ENCODE measurements at regions of chr17 and their contacts with region 1.

Region 1: GRCh38 chr17:29140051-29140621 is 40.1 kb downstream of the MYO18A start:
- DNase-seq: peak; percentile 51 to 87 (median 68)
- ATAC-seq: peak; percentile 61 to 72
- H3K4me3 Mint-ChIP-seq: peak overlapping the region; percentile 85 to 95 (median 92)
- H3K27ac Mint-ChIP-seq: peak overlapping the region; percentile 87 to 100 (median 98)
- H3K4me1 Mint-ChIP-seq: peaks cover 35 to 84% (median 65%) of the 10 kb centered on the region in 4 donors
- H3K27me3 Mint-ChIP-seq: no peaks in the 10 kb centered on the region

Region 2: DNA sequence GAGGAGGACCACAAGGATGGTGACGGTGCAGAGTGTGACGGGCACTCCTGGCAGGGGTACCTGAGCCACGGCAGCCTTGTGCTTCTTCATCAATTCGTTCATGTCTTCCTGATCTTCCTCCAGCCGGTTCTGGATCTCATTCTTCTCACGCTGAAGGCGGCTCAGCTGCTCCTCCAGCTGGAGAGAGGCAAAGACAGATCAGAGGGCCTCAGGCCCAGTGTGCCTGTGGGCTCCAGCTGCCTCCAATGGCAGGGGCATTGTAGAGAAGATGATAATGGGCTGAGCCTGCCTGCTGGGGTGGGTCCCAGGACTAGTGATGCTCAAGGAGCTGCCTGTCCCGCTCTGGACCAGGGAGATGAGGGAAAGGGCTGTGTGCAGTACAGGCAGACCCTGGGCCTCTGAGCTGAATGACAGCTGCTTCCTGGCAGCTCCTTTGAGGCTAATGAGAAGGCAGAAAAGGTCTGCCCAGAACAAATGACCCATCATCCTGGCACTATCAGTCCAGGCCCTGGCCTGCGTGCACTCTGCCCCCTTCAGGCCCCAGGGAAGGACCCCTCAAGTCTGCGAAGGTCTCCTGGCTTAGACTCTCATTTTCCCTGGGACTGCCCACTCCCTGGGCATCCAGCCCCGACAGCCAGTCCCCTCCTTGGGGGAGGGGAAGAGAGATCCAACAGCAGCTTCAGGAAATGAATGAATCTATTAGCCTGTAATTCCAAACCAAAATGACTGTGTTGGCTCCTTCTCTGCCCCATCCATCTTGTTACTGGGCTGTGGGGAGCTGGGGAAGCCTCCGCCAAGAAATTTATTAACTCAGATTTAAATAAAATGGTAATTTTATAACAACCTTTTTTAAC is 49.2 kb before region 1 on chr17:
- POLR2A ChIA-PET with region 1: no interaction called
- DNase-seq: no peak
- ATAC-seq: no peak
- H3K4me3 Mint-ChIP-seq: no peak overlapping the region
- H3K27ac Mint-ChIP-seq: peak overlapping the region in 1 of 10 donors; percentile 27
- H3K4me1 Mint-ChIP-seq: no peaks in the 10 kb centered on the region
- H3K27me3 Mint-ChIP-seq: no peaks in the 10 kb centered on the region

Region 3: GRCh38 chr17:29124117-29124924 is 15.8 kb before region 1 on chr17:
- POLR2A ChIA-PET with region 1: interaction called, 23 read pairs
- DNase-seq: peak in 6 of 10 donors; percentile 27 to 59 (median 40)
- ATAC-seq: peak; percentile 94 to 96
- H3K4me3 Mint-ChIP-seq: no peak overlapping the region
- H3K27ac Mint-ChIP-seq: peak overlapping the region in 1 of 10 donors; percentile 11
- H3K4me1 Mint-ChIP-seq: peaks cover 6 to 12% (median 10%) of the 10 kb centered on the region in 4 donors
- H3K27me3 Mint-ChIP-seq: no peaks in the 10 kb centered on the region

Region 4: DNA sequence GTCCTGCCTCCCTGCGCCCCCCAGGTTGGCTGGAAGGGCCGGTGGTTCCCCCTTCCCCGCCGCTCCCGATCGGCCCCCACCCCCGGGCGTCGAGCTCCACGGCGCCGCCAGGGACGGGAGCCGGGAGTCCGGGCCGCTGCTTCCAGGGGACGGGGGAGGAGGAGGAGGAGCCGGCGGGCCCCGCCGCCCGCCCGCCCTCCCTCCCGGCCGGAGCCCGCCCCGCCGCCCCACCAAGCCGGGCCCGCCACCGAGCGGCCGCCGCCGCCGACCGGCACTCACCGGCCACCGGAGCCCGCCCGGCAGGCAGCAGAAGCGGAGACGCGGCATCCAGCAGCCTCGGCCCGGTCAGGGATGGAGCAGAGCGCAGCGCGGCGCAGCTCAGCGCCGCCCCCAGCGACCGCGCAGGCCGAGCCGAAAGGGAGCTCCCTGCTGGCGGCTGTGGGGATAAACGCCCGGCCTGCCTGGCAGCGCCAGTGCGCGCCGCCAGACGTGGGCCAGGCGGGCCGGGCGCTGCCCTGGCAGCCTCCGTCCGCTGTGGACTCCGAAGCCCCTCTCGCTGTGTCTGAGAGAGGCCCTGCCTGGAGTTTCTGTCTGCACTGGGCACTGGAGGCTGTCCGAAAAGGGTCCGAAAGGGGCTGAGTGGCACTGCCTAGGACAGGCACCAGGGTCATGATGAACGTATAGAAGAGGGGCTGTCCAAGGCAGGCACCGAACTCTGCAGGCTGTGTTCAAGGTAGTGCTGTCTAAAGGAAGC is 40.1 kb after region 1 on chr17 and contains the start of gene MYO18A:
- POLR2A ChIA-PET with region 1: interaction called, 13 read pairs
- DNase-seq: peak; percentile 56 to 81 (median 75)
- ATAC-seq: peak; percentile 87 to 88
- H3K4me3 Mint-ChIP-seq: peak within 1 kb of the TSS; percentile 38 to 80 (median 60)
- H3K27ac Mint-ChIP-seq: peak within 1 kb of the TSS in 8 of 10 donors; percentile 29 to 81 (median 42)
- H3K4me1 Mint-ChIP-seq: peaks cover 9 to 29% (median 27%) of the 10 kb centered on the region in 4 donors
- H3K27me3 Mint-ChIP-seq: no peaks in the 10 kb centered on the region
- polyA plus RNA-seq, gene MYO18A: 4.6 to 12.6 (median 5.9) TPM